ENCODE measurements at regions of chr7 and their contacts with region 1.

Region 1: GRCh38 chr7:95916573-95917297 is 144.4 kb downstream of the DYNC1I1 start:
- DNase-seq: peak; percentile 72 to 93 (median 86)
- ATAC-seq: peak; percentile 79 to 84
- H3K4me3 ChIP-seq: no peak overlapping the region
- H3K27ac ChIP-seq: no peak overlapping the region
- H3K4me1 ChIP-seq: no peaks in the 10 kb centered on the region
- H3K27me3 ChIP-seq: no peaks in the 10 kb centered on the region

Region 2: GRCh38 chr7:96061844-96062243 is 145.1 kb after region 1 on chr7:
- intact Hi-C with region 1: loop called in 1 of 4 experiments (anchors 10 kb)
- DNase-seq: peak; percentile 22 to 75 (median 50)
- ATAC-seq: peak; percentile 34 to 36
- H3K4me3 ChIP-seq: no peak overlapping the region
- H3K27ac ChIP-seq: no peak overlapping the region
- H3K4me1 ChIP-seq: no peaks in the 10 kb centered on the region
- H3K27me3 ChIP-seq: no peaks in the 10 kb centered on the region

Region 3: GRCh38 chr7:96407427-96407826 is 490.7 kb after region 1 on chr7:
- intact Hi-C with region 1: loop called in 1 of 4 experiments (anchors 10 kb)
- DNase-seq: no peak
- ATAC-seq: no peak
- H3K4me3 ChIP-seq: no peak overlapping the region
- H3K27ac ChIP-seq: no peak overlapping the region
- H3K4me1 ChIP-seq: peaks cover 2% of the 10 kb centered on the region
- H3K27me3 ChIP-seq: no peaks in the 10 kb centered on the region

Region 4: GRCh38 chr7:97027427-97028234 is 1110.9 kb after region 1 on chr7:
- intact Hi-C with region 1: loop called in 2 of 4 experiments (anchors 5 to 10 kb)
- DNase-seq: peak; percentile 77 to 87 (median 87)
- ATAC-seq: peak; percentile 87 to 92
- H3K4me3 ChIP-seq: peak overlapping the region; percentile 66
- H3K27ac ChIP-seq: no peak overlapping the region
- H3K4me1 ChIP-seq: peaks cover 3% of the 10 kb centered on the region
- H3K27me3 ChIP-seq: no peaks in the 10 kb centered on the region

Region 5: DNA sequence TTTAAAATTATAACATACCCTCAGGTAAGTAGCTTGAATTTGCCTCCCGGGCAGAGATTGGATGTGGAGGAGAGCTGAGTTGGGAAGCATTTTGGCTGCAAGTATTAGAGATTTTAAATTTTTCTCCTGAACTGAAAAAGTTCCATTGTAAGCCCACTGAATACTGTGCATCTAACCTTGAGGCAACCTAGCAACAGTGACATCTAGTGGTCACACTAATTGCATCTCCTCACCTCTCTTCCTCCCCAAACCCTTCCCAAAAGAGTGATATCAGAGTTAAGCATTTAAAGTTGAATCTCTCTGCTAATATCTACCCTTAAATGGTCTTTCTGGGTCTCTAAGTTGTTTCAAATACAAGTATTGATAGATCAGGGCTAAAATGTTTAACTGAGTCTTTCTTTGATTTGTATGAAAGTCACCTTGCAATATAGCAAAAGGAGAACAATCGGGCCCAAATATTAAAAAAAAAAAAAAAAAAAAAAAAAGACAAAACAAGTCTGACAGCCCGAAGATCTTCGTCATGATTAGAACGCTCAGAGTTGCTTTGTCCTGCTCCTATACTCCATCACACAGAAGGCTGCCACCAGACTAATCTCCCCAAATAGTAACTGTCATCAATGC is 1148.3 kb after region 1 on chr7:
- intact Hi-C with region 1: loop called in 2 of 4 experiments (anchors 5 to 10 kb)
- DNase-seq: no peak
- ATAC-seq: peak; percentile 67 to 79
- H3K4me3 ChIP-seq: no peak overlapping the region
- H3K27ac ChIP-seq: no peak overlapping the region
- H3K4me1 ChIP-seq: no peaks in the 10 kb centered on the region
- H3K27me3 ChIP-seq: no peaks in the 10 kb centered on the region